CD4-positive, alpha-beta memory T cell (primary cell): ENCODE measurements at regions of chr5 and their contacts with region 1.

Region 1: GRCh38 chr5:179550511-179551230 is at the start of gene RUFY1:
- DNase-seq: peak; percentile 81 to 92 (median 87)
- H3K4me3 ChIP-seq: peak within 1 kb of the TSS; percentile 78 to 91
- H3K4me3 Mint-ChIP-seq: peak within 1 kb of the TSS; percentile 94 to 99 (median 96)
- H3K27ac ChIP-seq: peak within 1 kb of the TSS; percentile 66
- H3K27ac Mint-ChIP-seq: peak within 1 kb of the TSS; percentile 94 to 99 (median 97)
- H3K4me1 ChIP-seq: peaks cover 30% of the 10 kb centered on the region
- H3K4me1 Mint-ChIP-seq: peaks cover 17 to 45% (median 27%) of the 10 kb centered on the region in 4 donors
- H3K27me3 ChIP-seq: no peaks in the 10 kb centered on the region
- H3K27me3 Mint-ChIP-seq: no peaks in the 10 kb centered on the region
- total RNA-seq, gene RUFY1: 59.1 to 61.5 TPM

Region 2: DNA sequence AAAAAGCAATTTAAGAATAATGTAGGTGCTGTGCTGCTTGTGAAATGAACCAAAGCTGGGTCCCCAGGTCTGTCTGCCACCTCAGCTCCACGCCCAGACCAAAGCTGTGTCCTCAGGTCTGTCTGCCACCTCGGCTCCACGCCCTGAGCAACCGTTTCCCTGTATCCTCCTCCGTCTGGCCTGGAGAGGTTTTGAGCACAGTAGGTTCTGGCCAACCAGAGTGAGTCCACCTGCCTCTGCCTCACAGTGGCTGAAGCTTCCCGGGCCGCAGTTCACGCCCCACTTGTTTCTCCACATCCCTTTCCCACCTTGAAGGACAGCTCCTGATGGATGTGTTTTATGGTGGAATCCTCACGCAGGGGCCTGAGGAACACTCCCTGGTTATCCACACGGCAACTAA is 325.9 kb before region 1 on chr5:
- CTCF ChIA-PET with region 1: no interaction called
- POLR2A ChIA-PET with region 1: no interaction called
- intact Hi-C with region 1: no loop called
- DNase-seq: no peak
- H3K4me3 ChIP-seq: no peak overlapping the region
- H3K4me3 Mint-ChIP-seq: no peak overlapping the region
- H3K27ac ChIP-seq: no peak overlapping the region
- H3K27ac Mint-ChIP-seq: no peak overlapping the region
- H3K4me1 ChIP-seq: no peaks in the 10 kb centered on the region
- H3K4me1 Mint-ChIP-seq: peaks cover 0 to 3% (median 0%) of the 10 kb centered on the region in 4 donors
- H3K27me3 ChIP-seq: no peaks in the 10 kb centered on the region
- H3K27me3 Mint-ChIP-seq: peaks cover 0 to 7% of the 10 kb centered on the region in 2 donors

Region 3: GRCh38 chr5:179530069-179530998 is 20.3 kb before region 1 on chr5:
- CTCF ChIA-PET with region 1: no interaction called
- POLR2A ChIA-PET with region 1: interaction called, 11 read pairs
- intact Hi-C with region 1: no loop called
- DNase-seq: peak; percentile 31 to 46 (median 43)
- H3K4me3 ChIP-seq: peak overlapping the region in 1 of 2 donors; percentile 24
- H3K4me3 Mint-ChIP-seq: peak overlapping the region; percentile 58 to 78 (median 70)
- H3K27ac ChIP-seq: no peak overlapping the region
- H3K27ac Mint-ChIP-seq: peak overlapping the region in 1 of 7 donors; percentile 8
- H3K4me1 ChIP-seq: peaks cover 5% of the 10 kb centered on the region
- H3K4me1 Mint-ChIP-seq: peaks cover 3 to 5% (median 4%) of the 10 kb centered on the region in 4 donors
- H3K27me3 ChIP-seq: no peaks in the 10 kb centered on the region
- H3K27me3 Mint-ChIP-seq: no peaks in the 10 kb centered on the region

Region 4: GRCh38 chr5:179608131-179608581 is 57.5 kb after region 1 on chr5:
- CTCF ChIA-PET with region 1: no interaction called
- POLR2A ChIA-PET with region 1: interaction called, 12 read pairs
- intact Hi-C with region 1: no loop called
- DNase-seq: peak; percentile 39 to 69 (median 63)
- H3K4me3 ChIP-seq: no peak overlapping the region
- H3K4me3 Mint-ChIP-seq: peak overlapping the region in 5 of 8 donors; percentile 25 to 69 (median 40)
- H3K27ac ChIP-seq: no peak overlapping the region
- H3K27ac Mint-ChIP-seq: peak overlapping the region; percentile 17 to 100 (median 77)
- H3K4me1 ChIP-seq: peaks cover 46% of the 10 kb centered on the region
- H3K4me1 Mint-ChIP-seq: peaks cover 30 to 60% (median 42%) of the 10 kb centered on the region in 4 donors
- H3K27me3 ChIP-seq: no peaks in the 10 kb centered on the region
- H3K27me3 Mint-ChIP-seq: no peaks in the 10 kb centered on the region

Region 5: DNA sequence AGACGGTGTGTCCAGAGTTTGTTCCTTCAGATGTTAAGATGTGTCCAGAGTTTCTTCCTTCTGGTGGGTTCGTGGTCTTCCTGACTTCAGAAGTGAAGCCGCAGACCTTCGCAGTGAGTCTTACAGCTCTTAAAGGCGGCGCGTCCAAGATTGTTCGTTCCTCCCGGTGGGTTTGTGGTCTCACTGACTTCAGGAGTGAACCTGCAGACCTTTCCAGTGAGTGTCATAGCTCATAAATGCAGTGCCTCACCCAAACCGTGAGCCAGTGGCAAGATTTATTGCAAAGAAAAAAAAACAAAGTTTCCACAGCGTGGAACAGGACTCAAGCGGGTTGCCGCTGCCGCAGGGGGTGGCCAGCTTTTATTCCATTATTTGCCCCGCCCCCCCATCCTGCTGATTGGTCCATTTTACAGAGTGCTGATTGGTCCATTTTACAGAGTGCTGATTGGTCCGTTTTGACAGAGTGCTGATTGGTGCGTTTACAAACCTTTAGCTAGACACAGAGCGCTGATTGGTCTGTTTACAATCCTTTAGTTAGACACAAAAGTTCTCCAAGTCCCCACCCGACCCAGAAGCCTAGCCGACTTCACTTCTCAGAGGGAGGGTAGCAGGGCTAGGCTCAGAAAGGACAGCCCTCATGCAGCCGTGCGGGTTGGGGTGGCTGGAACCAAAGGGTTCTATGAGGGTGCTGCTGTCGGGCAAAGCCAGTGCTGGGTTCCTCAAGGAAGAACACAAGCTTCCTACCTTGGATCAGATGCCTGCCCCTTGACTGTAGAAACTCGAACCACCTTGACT is 530.0 kb after region 1 on chr5:
- CTCF ChIA-PET with region 1: no interaction called
- POLR2A ChIA-PET with region 1: no interaction called
- intact Hi-C with region 1: no loop called
- DNase-seq: peak; percentile 31 to 48 (median 38)
- H3K4me3 ChIP-seq: no peak overlapping the region
- H3K4me3 Mint-ChIP-seq: peak overlapping the region; percentile 63 to 81 (median 76)
- H3K27ac ChIP-seq: no peak overlapping the region
- H3K27ac Mint-ChIP-seq: peak overlapping the region in 1 of 7 donors; percentile 63
- H3K4me1 ChIP-seq: peaks cover 1% of the 10 kb centered on the region
- H3K4me1 Mint-ChIP-seq: peaks cover 4 to 10% (median 6%) of the 10 kb centered on the region in 4 donors
- H3K27me3 ChIP-seq: no peaks in the 10 kb centered on the region
- H3K27me3 Mint-ChIP-seq: peaks cover 25 to 40% of the 10 kb centered on the region in 2 donors